Brain microvascular endothelial cell (primary cell): ENCODE measurements at regions of chr11 and their contacts with region 1.

Region 1: GRCh38 chr11:19553683-19554333 is 158.8 kb upstream of the NAV2 start:
- DNase-seq: peak; percentile 49
- H3K4me3 ChIP-seq: no peak overlapping the region
- H3K27ac ChIP-seq: no peak overlapping the region
- H3K27me3 ChIP-seq: no peaks in the 10 kb centered on the region
- CTCF ChIP-seq: peak; percentile 93

Region 2: GRCh38 chr11:19683141-19683805 is 129.5 kb after region 1 on chr11:
- in situ Hi-C with region 1: no loop called
- DNase-seq: no peak
- H3K4me3 ChIP-seq: no peak overlapping the region
- H3K27ac ChIP-seq: no peak overlapping the region
- H3K27me3 ChIP-seq: no peaks in the 10 kb centered on the region
- CTCF ChIP-seq: no peak

Region 3: DNA sequence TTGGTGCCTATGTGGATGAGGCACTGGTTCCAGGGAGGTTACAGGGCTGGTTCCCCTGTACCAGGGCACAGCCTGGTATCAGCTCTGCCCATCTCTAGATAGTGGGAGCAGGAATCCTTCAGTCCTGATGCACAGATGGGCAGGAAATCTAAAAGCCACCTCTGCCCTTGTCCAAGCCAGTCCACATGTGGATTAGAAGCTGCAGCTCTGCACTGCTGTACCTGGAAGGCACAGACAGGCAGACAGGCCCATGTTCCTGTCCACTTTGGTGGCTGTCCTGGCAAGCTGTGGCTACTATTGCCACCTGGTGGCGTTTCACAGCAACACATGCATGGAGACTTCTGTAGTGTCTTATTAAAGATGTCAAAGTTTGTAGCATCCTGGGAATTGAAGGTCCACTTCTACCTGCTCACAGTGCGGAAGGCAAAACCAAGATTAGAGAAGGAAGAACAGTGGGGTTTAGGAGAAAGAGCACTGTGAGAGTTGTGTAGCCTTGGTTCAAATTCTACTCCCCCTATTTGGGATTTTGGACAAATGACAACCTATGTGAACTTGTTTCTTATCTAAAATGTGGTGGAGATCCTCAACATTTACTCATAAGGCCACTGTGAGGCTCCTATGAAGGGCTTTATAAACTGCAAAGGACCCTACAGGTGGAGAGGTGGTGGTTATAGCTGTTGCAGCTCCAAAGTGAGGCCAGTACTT is 188.9 kb after region 1 on chr11:
- in situ Hi-C with region 1: loop called (anchors 25 kb)
- DNase-seq: peak; percentile 79
- H3K4me3 ChIP-seq: no peak overlapping the region
- H3K27ac ChIP-seq: no peak overlapping the region
- H3K27me3 ChIP-seq: no peaks in the 10 kb centered on the region
- CTCF ChIP-seq: peak; percentile 89

Region 4: GRCh38 chr11:19890308-19890707 is 336.5 kb after region 1 on chr11:
- in situ Hi-C with region 1: loop called (anchors 25 kb)
- DNase-seq: peak; percentile 90
- H3K4me3 ChIP-seq: no peak overlapping the region
- H3K27ac ChIP-seq: peak overlapping the region; percentile 84
- H3K27me3 ChIP-seq: no peaks in the 10 kb centered on the region
- CTCF ChIP-seq: no peak